ENCODE measurements at regions of chr14 and their contacts with region 1.

Region 1: GRCh38 chr14:50762001-50762930 is 68.7 kb downstream of the NIN start:
- DNase-seq: peak; percentile 83
- ATAC-seq: peak; percentile 99
- H3K4me3 Mint-ChIP-seq: no peak overlapping the region
- H3K27ac Mint-ChIP-seq: peak overlapping the region; percentile 88
- H3K4me1 Mint-ChIP-seq: peaks cover 44% of the 10 kb centered on the region
- H3K27me3 Mint-ChIP-seq: no peaks in the 10 kb centered on the region
- CTCF ChIP-seq: no peak

Region 2: GRCh38 chr14:50677527-50678063 is 84.7 kb before region 1 on chr14:
- CTCF ChIA-PET with region 1: interaction called, 3 read pairs
- POLR2A ChIA-PET with region 1: no interaction called
- intact Hi-C with region 1: loop called (anchors 10 kb)
- DNase-seq: no peak
- ATAC-seq: no peak
- H3K4me3 Mint-ChIP-seq: peak overlapping the region; percentile 17
- H3K27ac Mint-ChIP-seq: peak overlapping the region; percentile 79
- H3K4me1 Mint-ChIP-seq: peaks cover 19% of the 10 kb centered on the region
- H3K27me3 Mint-ChIP-seq: no peaks in the 10 kb centered on the region
- CTCF ChIP-seq: no peak

Region 3: GRCh38 chr14:50714450-50715073 is 47.7 kb before region 1 on chr14:
- CTCF ChIA-PET with region 1: interaction called, 11 read pairs
- POLR2A ChIA-PET with region 1: no interaction called
- intact Hi-C with region 1: no loop called
- DNase-seq: peak; percentile 13
- ATAC-seq: peak; percentile 74
- H3K4me3 Mint-ChIP-seq: no peak overlapping the region
- H3K27ac Mint-ChIP-seq: no peak overlapping the region
- H3K4me1 Mint-ChIP-seq: no peaks in the 10 kb centered on the region
- H3K27me3 Mint-ChIP-seq: no peaks in the 10 kb centered on the region
- CTCF ChIP-seq: peak; percentile 42

Region 4: DNA sequence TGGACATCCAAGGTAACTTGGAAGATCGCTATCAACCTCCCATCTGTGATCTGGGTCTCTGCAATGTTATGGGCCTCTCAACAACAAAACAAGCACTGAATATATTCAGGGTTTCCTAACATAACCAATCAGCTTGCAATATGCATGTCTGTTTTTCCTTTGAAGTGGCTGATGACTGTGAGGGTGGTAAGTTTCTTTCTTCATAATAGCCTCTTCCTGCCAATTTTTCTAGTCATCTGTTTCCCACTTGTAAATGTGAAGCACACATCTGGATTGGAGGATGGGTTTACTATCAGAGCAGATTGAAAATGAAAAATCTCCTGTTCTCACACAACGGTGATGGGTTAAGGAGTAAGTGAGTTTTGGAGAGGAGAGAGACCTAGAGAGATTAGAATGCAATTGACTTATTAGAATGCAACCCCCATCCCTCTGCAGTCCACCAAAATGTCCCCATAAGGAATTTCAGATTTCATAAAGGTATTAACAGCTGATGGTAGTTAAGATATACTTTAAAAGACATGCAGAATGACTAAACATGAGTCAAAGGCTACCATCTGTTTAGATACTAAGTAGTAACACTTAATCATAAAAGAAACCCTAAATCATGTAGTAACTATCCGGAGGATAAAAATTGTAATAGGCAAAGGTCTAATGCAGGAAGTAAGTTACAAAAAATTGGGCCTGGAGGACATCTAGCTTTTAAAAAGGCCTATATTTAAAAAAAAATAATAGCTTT is 35.7 kb before region 1 on chr14:
- CTCF ChIA-PET with region 1: interaction called, 15 read pairs
- POLR2A ChIA-PET with region 1: interaction called, 4 read pairs
- intact Hi-C with region 1: no loop called
- DNase-seq: peak; percentile 43
- ATAC-seq: peak; percentile 95
- H3K4me3 Mint-ChIP-seq: peak overlapping the region; percentile 37
- H3K27ac Mint-ChIP-seq: peak overlapping the region; percentile 93
- H3K4me1 Mint-ChIP-seq: peaks cover 32% of the 10 kb centered on the region
- H3K27me3 Mint-ChIP-seq: no peaks in the 10 kb centered on the region
- CTCF ChIP-seq: no peak

Region 5: GRCh38 chr14:50736932-50737419 is 25.3 kb before region 1 on chr14:
- CTCF ChIA-PET with region 1: interaction called, 12 read pairs
- POLR2A ChIA-PET with region 1: interaction called, 9 read pairs
- intact Hi-C with region 1: no loop called
- DNase-seq: peak; percentile 80
- ATAC-seq: peak; percentile 94
- H3K4me3 Mint-ChIP-seq: no peak overlapping the region
- H3K27ac Mint-ChIP-seq: peak overlapping the region; percentile 89
- H3K4me1 Mint-ChIP-seq: peaks cover 46% of the 10 kb centered on the region
- H3K27me3 Mint-ChIP-seq: no peaks in the 10 kb centered on the region
- CTCF ChIP-seq: no peak

Region 6: DNA sequence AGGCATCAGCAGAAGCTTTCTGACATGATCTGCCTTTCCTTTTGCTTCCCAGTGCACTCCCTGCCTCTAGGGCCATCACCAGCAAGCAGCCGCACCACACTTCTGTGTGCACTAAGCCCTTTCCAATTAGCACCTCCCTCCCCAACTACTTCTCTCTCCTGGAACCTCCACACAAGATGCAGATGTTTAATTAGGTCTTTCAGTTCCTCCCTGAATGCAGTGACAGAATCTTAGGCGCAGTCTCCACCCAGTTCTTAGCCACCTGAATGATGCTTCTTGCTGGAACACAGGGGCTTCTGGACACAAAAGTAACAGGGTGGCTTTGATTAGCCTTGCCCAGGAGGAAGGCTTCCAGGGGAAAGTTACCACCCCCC is 35.8 kb after region 1 on chr14:
- CTCF ChIA-PET with region 1: no interaction called
- POLR2A ChIA-PET with region 1: no interaction called
- intact Hi-C with region 1: no loop called
- DNase-seq: no peak
- ATAC-seq: no peak
- H3K4me3 Mint-ChIP-seq: no peak overlapping the region
- H3K27ac Mint-ChIP-seq: peak overlapping the region; percentile 2
- H3K4me1 Mint-ChIP-seq: peaks cover 56% of the 10 kb centered on the region
- H3K27me3 Mint-ChIP-seq: no peaks in the 10 kb centered on the region
- CTCF ChIP-seq: no peak

Region 7: GRCh38 chr14:50846226-50846880 is 84.1 kb after region 1 on chr14:
- CTCF ChIA-PET with region 1: no interaction called
- POLR2A ChIA-PET with region 1: no interaction called
- intact Hi-C with region 1: no loop called
- DNase-seq: no peak
- ATAC-seq: no peak
- H3K4me3 Mint-ChIP-seq: no peak overlapping the region
- H3K27ac Mint-ChIP-seq: no peak overlapping the region
- H3K4me1 Mint-ChIP-seq: peaks cover 5% of the 10 kb centered on the region
- H3K27me3 Mint-ChIP-seq: no peaks in the 10 kb centered on the region
- CTCF ChIP-seq: no peak

Measured in activated CD8-positive, alpha-beta T cell treated with anti-CD3 and anti-CD28 coated beads for 36 hours (primary cell).